Heart left ventricle (tissue), 16 donors: ENCODE measurements at regions of chr2 and their contacts with region 1.

Region 1: DNA sequence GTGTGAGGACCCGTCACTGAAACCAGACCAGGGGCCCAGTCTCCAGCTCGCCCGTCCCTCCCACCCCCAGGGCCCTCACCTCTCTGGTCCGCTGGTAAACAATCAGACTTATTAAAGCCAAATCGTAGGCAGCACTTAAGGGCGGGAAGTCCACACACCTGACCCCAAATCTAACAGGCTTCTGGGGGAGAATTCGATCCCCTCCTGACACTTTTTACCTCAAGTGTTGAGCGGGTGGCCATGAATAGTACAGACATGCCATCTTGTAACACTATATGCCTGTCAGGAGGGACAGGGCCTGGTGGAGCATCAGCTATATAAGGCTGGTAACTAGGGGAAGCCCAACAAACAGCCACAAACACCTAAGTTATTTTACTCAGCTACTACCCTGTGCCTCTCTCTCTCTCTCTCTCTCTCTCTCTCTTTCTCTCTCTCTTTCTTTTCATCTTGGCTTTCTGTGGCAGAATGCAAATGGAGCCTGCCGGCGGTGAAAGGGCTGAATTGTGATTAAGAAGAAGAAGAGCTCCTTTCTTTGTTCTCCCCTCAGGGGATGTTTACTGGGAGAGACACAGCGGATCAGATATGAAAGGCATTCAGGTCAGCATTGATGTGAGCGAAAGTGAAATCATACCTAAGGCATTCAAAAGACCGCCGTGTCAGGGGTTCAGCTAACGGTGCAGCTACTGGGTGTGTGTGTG is 9.5 kb downstream of the ZEB2 start:
- DNase-seq: peak in 3 of 5 donors; percentile 40 to 73 (median 63)
- ATAC-seq: peak; percentile 78 to 85 (median 81)
- H3K4me3 ChIP-seq: peak overlapping the region in 11 of 12 donors; percentile 10 to 96 (median 81)
- H3K27ac ChIP-seq: peak overlapping the region; percentile 90 to 99 (median 98)
- H3K4me1 ChIP-seq: peaks cover 0 to 89% (median 57%) of the 10 kb centered on the region in 12 donors
- H3K27me3 ChIP-seq: no peaks in the 10 kb centered on the region
- CTCF ChIP-seq: no peak
- POLR2A ChIP-seq: peak in 1 of 2 donors; percentile 15

Region 2: GRCh38 chr2:143802871-143803650 is 707.4 kb before region 1 on chr2:
- intact Hi-C with region 1: no loop called
- DNase-seq: no peak
- ATAC-seq: no peak
- H3K4me3 ChIP-seq: no peak overlapping the region
- H3K27ac ChIP-seq: no peak overlapping the region
- H3K4me1 ChIP-seq: no peaks in the 10 kb centered on the region
- H3K27me3 ChIP-seq: no peaks in the 10 kb centered on the region
- CTCF ChIP-seq: no peak
- POLR2A ChIP-seq: no peak

Region 3: DNA sequence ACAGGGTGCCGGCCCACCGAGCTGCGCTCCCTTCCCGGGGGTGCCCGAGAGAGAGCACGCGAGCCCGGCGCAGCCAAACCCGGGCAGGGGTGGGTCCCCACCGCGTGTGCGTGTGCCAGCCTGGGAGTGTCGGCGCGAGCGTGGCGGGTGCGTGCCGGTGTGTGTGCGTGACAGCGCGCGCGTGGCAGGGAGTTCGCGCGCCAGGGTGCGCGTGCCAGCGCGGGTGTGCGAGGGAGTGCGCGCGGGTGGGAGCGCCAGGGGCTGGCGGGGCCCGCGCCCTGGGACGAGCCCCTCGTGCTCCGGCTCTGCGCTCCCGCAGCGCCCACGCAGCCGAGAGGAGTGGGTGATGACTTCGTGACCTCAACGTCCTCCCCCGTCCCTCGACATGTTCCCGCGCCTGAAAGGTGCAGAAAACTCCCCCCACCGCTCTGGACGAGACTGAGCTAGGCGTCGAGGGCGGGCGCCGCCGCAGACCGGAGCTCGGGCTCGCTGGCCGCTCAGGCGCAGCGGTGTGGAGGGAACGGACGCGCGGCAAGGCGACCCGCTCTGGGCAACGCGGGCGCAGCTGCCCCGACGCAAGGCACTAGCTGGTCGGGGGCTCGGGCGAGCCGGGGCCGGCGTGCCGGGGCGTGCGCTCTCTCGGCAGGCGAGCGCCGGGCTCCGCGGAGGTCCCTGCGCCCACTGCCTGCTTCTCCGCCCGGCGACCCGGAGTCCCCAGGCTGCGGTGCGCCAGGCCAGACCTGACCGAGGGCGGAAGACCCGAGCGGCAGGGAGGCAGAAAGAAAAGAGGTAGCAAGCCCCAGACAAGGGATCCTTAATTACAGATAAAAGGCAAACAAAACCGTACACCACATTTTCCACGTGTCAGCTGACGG is 573.4 kb before region 1 on chr2:
- intact Hi-C with region 1: loop called in 2 of 10 experiments (anchors 5 to 10 kb)
- DNase-seq: peak; percentile 22 to 70 (median 38)
- ATAC-seq: peak in 3 of 4 donors; percentile 56 to 87 (median 83)
- H3K4me3 ChIP-seq: peak overlapping the region; percentile 40 to 68 (median 60)
- H3K27ac ChIP-seq: peak overlapping the region in 11 of 12 donors; percentile 11 to 80 (median 48)
- H3K4me1 ChIP-seq: peaks cover 0 to 17% (median 4%) of the 10 kb centered on the region in 12 donors
- H3K27me3 ChIP-seq: peaks cover 0 to 24% (median 0%) of the 10 kb centered on the region in 9 donors
- CTCF ChIP-seq: no peak
- POLR2A ChIP-seq: no peak

Region 4: DNA sequence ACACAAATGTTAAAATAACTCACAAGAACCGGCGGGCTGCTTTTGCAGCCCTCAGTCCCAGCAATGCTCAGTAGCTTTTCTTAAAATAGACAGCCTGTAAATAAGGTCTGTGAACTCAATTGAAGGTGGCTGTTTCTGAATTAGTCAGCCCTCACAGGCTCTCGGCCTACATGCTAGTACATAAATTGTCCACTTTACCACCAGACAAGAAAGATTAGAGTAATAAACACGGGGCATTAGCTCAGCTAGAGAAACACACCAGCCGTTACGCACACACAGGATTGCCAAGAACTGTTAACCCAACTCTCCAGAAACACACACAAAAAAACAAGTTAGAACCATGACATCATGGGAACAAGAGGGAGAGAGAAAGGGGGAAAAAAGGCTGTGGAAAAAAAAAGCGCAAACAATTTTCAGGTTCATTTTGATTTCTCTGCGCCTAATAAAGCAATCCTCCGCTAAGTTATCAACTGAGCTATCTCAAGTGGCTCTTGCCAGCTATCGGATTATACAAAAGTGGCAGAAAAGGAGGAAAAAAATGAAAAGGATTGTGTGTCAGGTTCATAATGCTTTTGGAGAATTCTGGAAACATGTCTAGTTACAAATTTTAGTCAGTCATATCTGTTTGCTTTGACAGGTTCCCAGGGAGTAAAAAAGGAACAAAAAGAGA is 79.6 kb before region 1 on chr2:
- intact Hi-C with region 1: loop called in 5 of 10 experiments (anchors 5 kb)
- DNase-seq: peak in 2 of 5 donors; percentile 44 to 46
- ATAC-seq: peak; percentile 81 to 85 (median 82)
- H3K4me3 ChIP-seq: peak overlapping the region in 10 of 12 donors; percentile 3 to 50 (median 35)
- H3K27ac ChIP-seq: peak overlapping the region; percentile 37 to 82 (median 75)
- H3K4me1 ChIP-seq: peaks cover 0 to 97% (median 51%) of the 10 kb centered on the region in 12 donors
- H3K27me3 ChIP-seq: no peaks in the 10 kb centered on the region
- CTCF ChIP-seq: no peak
- POLR2A ChIP-seq: no peak

Region 5: DNA sequence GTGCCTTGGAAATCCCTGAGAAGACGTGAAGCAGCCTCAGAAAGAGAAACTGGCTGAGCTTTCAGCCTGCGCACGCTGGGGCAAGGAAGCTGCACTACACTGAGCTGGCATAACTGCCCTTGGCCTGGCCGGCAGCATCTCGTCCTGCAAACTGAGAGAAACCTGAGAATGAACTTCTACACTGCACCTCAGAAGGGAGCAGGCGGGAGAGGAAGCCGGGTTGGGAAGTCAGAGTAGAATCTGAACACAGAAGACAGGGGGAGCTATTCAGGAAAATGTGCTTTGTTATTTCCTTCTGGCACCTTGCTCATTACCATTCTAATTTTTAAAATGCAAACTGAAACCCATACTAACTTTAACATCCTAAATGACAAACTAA is 61.4 kb before region 1 on chr2:
- intact Hi-C with region 1: loop called in 5 of 10 experiments (anchors 2 to 5 kb)
- DNase-seq: peak in 2 of 5 donors; percentile 42 to 56
- ATAC-seq: peak; percentile 33 to 74 (median 60)
- H3K4me3 ChIP-seq: peak overlapping the region in 7 of 12 donors; percentile 10 to 29 (median 23)
- H3K27ac ChIP-seq: peak overlapping the region; percentile 23 to 63 (median 58)
- H3K4me1 ChIP-seq: peaks cover 0 to 86% (median 45%) of the 10 kb centered on the region in 12 donors
- H3K27me3 ChIP-seq: no peaks in the 10 kb centered on the region
- CTCF ChIP-seq: peak in 11 of 12 donors; percentile 17 to 63 (median 46)
- POLR2A ChIP-seq: no peak

Region 6: DNA sequence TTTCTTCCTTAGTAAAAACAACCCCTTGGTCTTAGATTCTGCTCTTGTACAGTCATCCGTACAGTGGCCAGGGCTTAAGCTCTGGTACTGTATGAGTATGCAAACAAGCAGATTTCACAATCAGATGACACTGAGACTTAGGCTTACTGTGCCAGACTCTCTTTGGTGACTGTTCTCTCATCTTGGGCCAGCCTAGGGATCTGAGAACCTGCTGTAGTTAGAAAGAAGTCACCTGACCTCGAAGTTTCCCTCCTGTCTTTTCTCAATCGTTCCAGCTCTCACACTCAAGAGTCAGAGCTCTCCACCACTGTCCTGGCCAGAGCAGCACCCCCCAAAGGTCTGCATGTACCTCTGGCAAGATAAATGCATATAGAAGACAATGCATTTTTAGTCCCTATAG is 53.8 kb before region 1 on chr2:
- intact Hi-C with region 1: loop called in 7 of 10 experiments (anchors 2 to 5 kb)
- DNase-seq: peak in 1 of 5 donors; percentile 38
- ATAC-seq: peak; percentile 50 to 89 (median 68)
- H3K4me3 ChIP-seq: no peak overlapping the region
- H3K27ac ChIP-seq: peak overlapping the region in 6 of 12 donors; percentile 31 to 73 (median 46)
- H3K4me1 ChIP-seq: peaks cover 0 to 100% (median 74%) of the 10 kb centered on the region in 12 donors
- H3K27me3 ChIP-seq: no peaks in the 10 kb centered on the region
- CTCF ChIP-seq: no peak
- POLR2A ChIP-seq: no peak